Caco-2 (cell line): ENCODE measurements at regions of chr10 and their contacts with region 1.

Region 1: DNA sequence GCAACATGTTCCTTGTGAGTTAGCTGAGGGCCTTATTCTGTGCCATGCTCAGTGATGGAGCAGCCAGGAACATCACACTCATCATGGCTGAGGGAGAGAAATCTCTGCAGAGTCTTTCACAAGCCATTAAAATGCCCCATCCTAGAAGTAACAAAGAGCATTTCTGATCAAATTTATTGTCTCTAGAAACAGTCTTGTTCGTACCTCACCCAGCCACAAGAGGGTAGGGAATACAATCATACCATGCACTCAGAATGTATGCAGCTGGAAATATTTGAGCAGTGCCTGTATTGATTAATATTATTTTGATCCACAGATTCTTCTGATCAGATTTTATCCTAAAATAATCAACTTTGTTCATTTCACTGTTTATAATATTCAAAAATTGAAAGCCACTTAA is 17.3 kb downstream of the VPS26A start:
- DNase-seq: no peak
- H3K4me3 ChIP-seq: no peak overlapping the region
- H3K4me3 Mint-ChIP-seq: no peak overlapping the region
- H3K27ac Mint-ChIP-seq: no peak overlapping the region
- H3K4me1 ChIP-seq: no peaks in the 10 kb centered on the region
- H3K4me1 Mint-ChIP-seq: no peaks in the 10 kb centered on the region
- H3K27me3 ChIP-seq: no peaks in the 10 kb centered on the region
- H3K27me3 Mint-ChIP-seq: no peaks in the 10 kb centered on the region
- CTCF ChIP-seq: peak in 1 of 2 experiments; percentile 32

Region 2: DNA sequence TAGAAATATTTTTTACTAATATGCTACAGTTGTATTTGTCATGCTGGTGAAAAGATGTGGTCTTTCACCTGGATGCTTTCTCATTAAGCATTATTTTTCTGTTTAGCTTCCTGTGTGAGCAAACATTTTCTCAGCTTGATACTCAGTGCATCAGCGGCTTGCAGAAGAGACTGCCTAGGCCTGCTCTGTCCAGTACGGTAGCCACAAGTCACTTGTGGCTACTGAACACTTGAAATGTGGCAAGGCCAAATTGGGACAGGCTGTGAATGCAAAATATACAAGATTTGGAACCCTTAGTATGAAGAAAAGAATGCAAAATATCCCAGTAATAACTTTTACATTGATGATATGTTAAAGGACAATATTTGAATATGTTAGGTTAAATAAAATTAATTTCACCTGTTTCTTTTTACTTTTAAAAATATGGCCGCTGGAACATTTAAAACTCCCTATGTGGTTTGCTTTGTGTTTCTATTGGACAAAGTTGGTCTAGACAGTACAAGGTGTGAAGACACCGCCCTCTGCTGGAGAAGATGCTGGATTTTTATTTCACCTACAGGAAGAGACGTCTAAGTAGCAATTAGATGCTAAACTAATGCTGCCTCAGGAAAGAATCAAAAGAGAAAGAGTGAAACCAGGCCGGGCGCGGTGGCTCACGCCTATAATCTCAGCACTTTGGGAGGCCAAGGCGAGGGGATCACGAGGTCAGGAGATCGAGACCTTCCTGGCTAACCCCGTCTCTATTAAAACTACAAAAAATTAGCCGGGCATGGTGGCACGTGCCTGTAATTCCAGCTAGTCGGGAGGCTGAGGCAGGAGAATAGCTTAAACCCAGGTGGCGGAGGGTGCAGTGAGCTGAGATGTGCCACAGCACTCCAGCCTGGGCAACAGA is 48.1 kb before region 1 on chr10:
- CTCF ChIA-PET with region 1: no interaction called
- POLR2A ChIA-PET with region 1: no interaction called
- intact Hi-C with region 1: no loop called
- DNase-seq: peak; percentile 88 to 91
- H3K4me3 ChIP-seq: no peak overlapping the region
- H3K4me3 Mint-ChIP-seq: no peak overlapping the region
- H3K27ac Mint-ChIP-seq: no peak overlapping the region
- H3K4me1 ChIP-seq: no peaks in the 10 kb centered on the region
- H3K4me1 Mint-ChIP-seq: peaks cover 7% of the 10 kb centered on the region
- H3K27me3 ChIP-seq: no peaks in the 10 kb centered on the region
- H3K27me3 Mint-ChIP-seq: peaks cover 11% of the 10 kb centered on the region
- CTCF ChIP-seq: peak; percentile 93 to 98

Region 3: DNA sequence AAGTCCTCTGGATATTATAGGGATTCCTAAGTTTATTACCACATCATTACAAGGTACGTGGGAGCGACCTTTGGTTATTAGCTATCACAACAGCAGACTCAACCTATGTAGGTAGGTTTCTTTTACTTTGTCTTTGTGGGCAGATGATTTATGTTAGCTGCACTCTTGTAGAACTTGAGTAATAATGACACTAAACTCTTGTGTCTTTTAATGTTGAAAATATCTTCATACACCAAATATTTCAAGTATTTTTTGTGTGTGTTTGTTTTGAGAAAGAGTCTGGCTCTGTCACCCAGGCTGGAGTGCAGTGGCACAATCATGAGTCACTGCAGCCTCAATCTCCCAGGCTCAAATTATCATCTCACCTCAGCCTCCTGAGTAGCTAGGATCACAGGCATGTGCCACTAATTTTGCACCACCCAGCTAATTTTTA is 19.5 kb after region 1 on chr10:
- CTCF ChIA-PET with region 1: no interaction called
- POLR2A ChIA-PET with region 1: no interaction called
- intact Hi-C with region 1: loop called (anchors 1 kb)
- DNase-seq: peak in 1 of 2 experiments; percentile 36
- H3K4me3 ChIP-seq: no peak overlapping the region
- H3K4me3 Mint-ChIP-seq: no peak overlapping the region
- H3K27ac Mint-ChIP-seq: no peak overlapping the region
- H3K4me1 ChIP-seq: no peaks in the 10 kb centered on the region
- H3K4me1 Mint-ChIP-seq: no peaks in the 10 kb centered on the region
- H3K27me3 ChIP-seq: no peaks in the 10 kb centered on the region
- H3K27me3 Mint-ChIP-seq: no peaks in the 10 kb centered on the region
- CTCF ChIP-seq: no peak